Naive thymus-derived CD4-positive, alpha-beta T cell (primary cell): ENCODE measurements at regions of chr3 and their contacts with region 1.

Region 1: DNA sequence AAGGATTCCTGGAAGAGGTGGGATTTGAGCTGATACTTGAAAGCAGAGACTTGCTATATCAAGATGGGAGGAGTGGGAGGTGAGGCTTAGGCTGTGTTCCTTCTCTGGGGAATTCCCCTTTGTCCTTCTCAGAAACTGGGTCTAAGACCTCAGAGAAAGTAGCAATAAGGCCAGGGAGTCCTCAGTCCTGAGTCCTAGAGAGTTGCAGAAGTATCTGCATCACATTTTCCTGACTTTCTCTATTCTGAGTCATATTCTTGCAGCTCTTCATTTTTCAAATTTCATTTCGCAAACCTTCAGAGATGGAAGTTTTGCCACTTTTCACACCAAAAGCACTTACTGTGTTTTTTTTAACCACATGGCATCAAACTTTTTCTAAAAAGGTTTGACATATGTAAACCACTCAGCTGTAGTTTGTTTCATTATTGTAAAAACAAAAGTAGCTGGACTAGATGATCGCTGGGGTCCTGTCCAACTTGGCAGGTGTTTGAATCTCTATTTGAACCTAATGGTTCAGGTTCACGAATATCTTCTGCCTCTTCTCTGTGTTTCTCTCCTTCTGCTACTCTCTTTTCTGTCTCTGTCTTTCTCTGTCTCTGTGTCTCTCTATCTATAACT is 21.3 kb downstream of the COLQ start:
- DNase-seq: no peak
- ATAC-seq: peak; percentile 67
- H3K4me3 ChIP-seq: no peak overlapping the region
- H3K4me3 Mint-ChIP-seq: peak overlapping the region in 2 of 10 donors; percentile 21 to 43
- H3K27ac ChIP-seq: no peak overlapping the region
- H3K27ac Mint-ChIP-seq: peak overlapping the region in 1 of 9 donors; percentile 0
- H3K4me1 ChIP-seq: peaks cover 0 to 6% of the 10 kb centered on the region in 2 donors
- H3K4me1 Mint-ChIP-seq: peaks cover 0 to 49% (median 0%) of the 10 kb centered on the region in 7 donors
- H3K27me3 ChIP-seq: no peaks in the 10 kb centered on the region
- H3K27me3 Mint-ChIP-seq: peaks cover 0 to 3% (median 0%) of the 10 kb centered on the region in 5 donors

Region 2: DNA sequence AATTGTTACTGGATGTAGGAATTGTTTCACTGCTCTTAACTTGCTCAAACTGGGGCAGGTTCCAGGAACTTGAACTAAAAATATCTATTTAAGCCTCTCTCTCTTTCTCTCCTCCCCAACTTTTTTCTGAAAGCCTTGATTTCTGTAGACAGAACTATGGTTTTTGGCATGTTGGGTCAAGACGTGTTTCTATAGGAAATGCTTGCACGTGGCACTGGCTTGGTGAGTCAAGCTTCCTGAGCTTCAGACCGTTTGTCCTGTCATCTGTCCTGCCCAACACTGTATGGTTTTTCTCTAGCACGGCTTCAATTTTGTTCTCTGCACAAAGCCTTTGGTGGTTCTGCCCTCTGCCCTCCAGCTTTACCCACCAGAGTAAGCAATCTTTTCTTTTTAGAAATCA is 59.3 kb before region 1 on chr3:
- CTCF ChIA-PET with region 1: no interaction called
- POLR2A ChIA-PET with region 1: no interaction called
- intact Hi-C with region 1: no loop called
- DNase-seq: no peak
- ATAC-seq: peak; percentile 63
- H3K4me3 ChIP-seq: no peak overlapping the region
- H3K4me3 Mint-ChIP-seq: peak overlapping the region in 1 of 10 donors; percentile 41
- H3K27ac ChIP-seq: no peak overlapping the region
- H3K27ac Mint-ChIP-seq: peak overlapping the region in 6 of 9 donors; percentile 17 to 58 (median 50)
- H3K4me1 ChIP-seq: no peaks in the 10 kb centered on the region
- H3K4me1 Mint-ChIP-seq: peaks cover 0 to 35% (median 5%) of the 10 kb centered on the region in 7 donors
- H3K27me3 ChIP-seq: no peaks in the 10 kb centered on the region
- H3K27me3 Mint-ChIP-seq: no peaks in the 10 kb centered on the region

Region 3: GRCh38 chr3:15535732-15536131 is 35.5 kb after region 1 on chr3:
- CTCF ChIA-PET with region 1: no interaction called
- POLR2A ChIA-PET with region 1: no interaction called
- intact Hi-C with region 1: loop called in 1 of 2 experiments (anchors 5 kb)
- DNase-seq: peak in 2 of 9 donors; percentile 5 to 55
- ATAC-seq: no peak
- H3K4me3 ChIP-seq: no peak overlapping the region
- H3K4me3 Mint-ChIP-seq: peak overlapping the region in 9 of 10 donors; percentile 14 to 76 (median 65)
- H3K27ac ChIP-seq: no peak overlapping the region
- H3K27ac Mint-ChIP-seq: peak overlapping the region; percentile 6 to 89 (median 78)
- H3K4me1 ChIP-seq: peaks cover 32 to 34% of the 10 kb centered on the region in 2 donors
- H3K4me1 Mint-ChIP-seq: peaks cover 27 to 59% (median 44%) of the 10 kb centered on the region in 7 donors
- H3K27me3 ChIP-seq: no peaks in the 10 kb centered on the region
- H3K27me3 Mint-ChIP-seq: no peaks in the 10 kb centered on the region

Region 4: GRCh38 chr3:15549846-15550245 is 49.6 kb after region 1 on chr3:
- CTCF ChIA-PET with region 1: no interaction called
- POLR2A ChIA-PET with region 1: no interaction called
- intact Hi-C with region 1: no loop called
- DNase-seq: no peak
- ATAC-seq: no peak
- H3K4me3 ChIP-seq: no peak overlapping the region
- H3K4me3 Mint-ChIP-seq: no peak overlapping the region
- H3K27ac ChIP-seq: no peak overlapping the region
- H3K27ac Mint-ChIP-seq: no peak overlapping the region
- H3K4me1 ChIP-seq: no peaks in the 10 kb centered on the region
- H3K4me1 Mint-ChIP-seq: peaks cover 0 to 13% (median 0%) of the 10 kb centered on the region in 7 donors
- H3K27me3 ChIP-seq: no peaks in the 10 kb centered on the region
- H3K27me3 Mint-ChIP-seq: peaks cover 0 to 13% (median 0%) of the 10 kb centered on the region in 5 donors

Region 5: GRCh38 chr3:15882577-15882976 is 382.4 kb after region 1 on chr3:
- CTCF ChIA-PET with region 1: no interaction called
- POLR2A ChIA-PET with region 1: no interaction called
- intact Hi-C with region 1: no loop called
- DNase-seq: no peak
- ATAC-seq: no peak
- H3K4me3 ChIP-seq: no peak overlapping the region
- H3K4me3 Mint-ChIP-seq: no peak overlapping the region
- H3K27ac ChIP-seq: no peak overlapping the region
- H3K27ac Mint-ChIP-seq: no peak overlapping the region
- H3K4me1 ChIP-seq: no peaks in the 10 kb centered on the region
- H3K4me1 Mint-ChIP-seq: no peaks in the 10 kb centered on the region
- H3K27me3 ChIP-seq: no peaks in the 10 kb centered on the region
- H3K27me3 Mint-ChIP-seq: peaks cover 0 to 4% (median 0%) of the 10 kb centered on the region in 5 donors